Aorta (tissue), 5 donors: ENCODE measurements at regions of chr4 and their contacts with region 1.

Region 1: GRCh38 chr4:113979148-113979904 is at the start of gene ARSJ:
- DNase-seq: peak; percentile 68 to 92
- ATAC-seq: peak; percentile 86
- H3K4me3 ChIP-seq: peak within 1 kb of the TSS; percentile 71 to 93
- H3K27ac ChIP-seq: peak within 1 kb of the TSS; percentile 71 to 87
- H3K4me1 ChIP-seq: peaks cover 0 to 7% of the 10 kb centered on the region in 2 donors
- H3K27me3 ChIP-seq: no peaks in the 10 kb centered on the region
- total RNA-seq, gene ARSJ: 13.5 to 42.4 TPM

Region 2: DNA sequence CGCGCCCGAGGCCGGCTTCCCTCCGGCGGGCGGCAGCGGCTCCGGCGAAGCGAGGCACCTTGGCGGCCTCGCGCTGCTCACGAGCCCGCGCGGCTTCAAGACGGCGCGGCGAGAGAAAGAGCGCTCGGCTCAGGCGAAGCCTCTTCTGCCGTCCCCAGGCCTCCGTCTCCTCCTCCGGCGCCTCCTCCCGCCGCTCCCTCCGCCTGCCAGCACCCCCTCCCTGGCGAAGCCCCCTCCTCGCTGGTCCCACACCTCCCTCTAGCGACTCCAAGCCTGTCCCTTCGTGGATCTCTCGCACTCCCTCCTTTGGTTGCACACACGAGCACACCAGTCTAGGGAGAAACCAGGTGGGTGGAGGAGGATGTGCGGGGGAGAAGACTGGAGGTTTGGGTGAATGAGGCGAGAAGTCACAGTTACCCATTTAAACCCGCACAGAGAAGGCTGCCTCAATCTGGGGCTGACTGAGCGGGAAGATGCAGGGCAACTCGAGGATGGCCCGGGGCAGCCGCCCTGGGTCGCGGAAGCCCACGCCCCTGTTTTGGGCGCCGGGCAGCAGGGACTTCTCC is 217.6 kb before region 1 on chr4 and contains the start of gene CAMK2D:
- intact Hi-C with region 1: loop called in 1 of 2 experiments (anchors 5 kb)
- DNase-seq: peak; percentile 91 to 93
- ATAC-seq: peak; percentile 90
- H3K4me3 ChIP-seq: peak within 1 kb of the TSS; percentile 51 to 77
- H3K27ac ChIP-seq: peak within 1 kb of the TSS; percentile 64 to 90
- H3K4me1 ChIP-seq: no peaks in the 10 kb centered on the region
- H3K27me3 ChIP-seq: no peaks in the 10 kb centered on the region
- total RNA-seq, gene CAMK2D: 52.3 to 71.8 TPM

Region 3: GRCh38 chr4:113790478-113790877 is 188.8 kb before region 1 on chr4:
- intact Hi-C with region 1: no loop called
- DNase-seq: no peak
- ATAC-seq: no peak
- H3K4me3 ChIP-seq: no peak overlapping the region
- H3K27ac ChIP-seq: no peak overlapping the region
- H3K4me1 ChIP-seq: no peaks in the 10 kb centered on the region
- H3K27me3 ChIP-seq: no peaks in the 10 kb centered on the region

Region 4: DNA sequence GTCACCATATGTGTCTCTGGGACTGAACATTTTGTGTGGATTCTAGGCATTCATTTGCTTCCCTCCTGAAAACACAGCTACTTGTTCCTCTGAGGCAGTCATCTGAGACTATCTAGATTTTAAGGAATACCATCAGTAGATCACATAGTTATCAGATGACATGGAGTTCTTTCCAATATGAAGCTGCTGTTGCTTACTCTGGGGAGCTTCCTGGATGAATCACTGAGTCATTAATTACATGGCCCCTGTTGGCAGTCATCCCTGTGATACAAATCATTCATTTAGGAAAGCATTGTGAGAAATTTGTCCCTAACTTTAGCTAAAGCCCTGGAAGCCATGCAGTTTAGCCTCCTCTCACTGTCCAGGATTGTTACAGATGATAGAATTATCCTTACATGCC is 98.3 kb after region 1 on chr4:
- intact Hi-C with region 1: no loop called
- DNase-seq: no peak
- ATAC-seq: no peak
- H3K4me3 ChIP-seq: no peak overlapping the region
- H3K27ac ChIP-seq: no peak overlapping the region
- H3K4me1 ChIP-seq: no peaks in the 10 kb centered on the region
- H3K27me3 ChIP-seq: no peaks in the 10 kb centered on the region

Region 5: GRCh38 chr4:114121221-114121620 is 141.9 kb after region 1 on chr4:
- intact Hi-C with region 1: no loop called
- DNase-seq: no peak
- ATAC-seq: no peak
- H3K4me3 ChIP-seq: no peak overlapping the region
- H3K27ac ChIP-seq: no peak overlapping the region
- H3K4me1 ChIP-seq: no peaks in the 10 kb centered on the region
- H3K27me3 ChIP-seq: peaks cover 0 to 1% of the 10 kb centered on the region in 2 donors

Region 6: DNA sequence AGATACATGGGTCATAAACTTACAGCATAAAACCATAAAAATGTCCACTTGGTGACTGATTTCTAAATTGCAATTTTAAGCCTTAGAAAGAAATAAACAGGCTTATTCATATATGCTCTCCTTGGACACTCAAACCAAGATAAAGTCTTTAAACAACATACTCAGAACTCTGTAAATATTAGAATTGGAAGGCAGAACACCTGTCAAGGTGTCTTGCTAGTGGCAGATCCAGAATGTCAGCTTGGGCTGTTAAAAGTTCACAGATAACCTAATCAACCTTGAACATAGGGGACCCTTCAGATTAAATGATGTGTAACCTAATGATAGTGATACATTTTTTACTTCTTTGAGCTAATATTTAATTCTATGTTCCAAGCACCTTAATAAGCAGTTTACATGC is 208.3 kb after region 1 on chr4:
- intact Hi-C with region 1: no loop called
- DNase-seq: no peak
- ATAC-seq: no peak
- H3K4me3 ChIP-seq: no peak overlapping the region
- H3K27ac ChIP-seq: no peak overlapping the region
- H3K4me1 ChIP-seq: no peaks in the 10 kb centered on the region
- H3K27me3 ChIP-seq: no peaks in the 10 kb centered on the region

Region 7: GRCh38 chr4:114250439-114250891 is 271.1 kb after region 1 on chr4:
- intact Hi-C with region 1: loop called in 1 of 2 experiments (anchors 10 kb)
- DNase-seq: no peak
- ATAC-seq: no peak
- H3K4me3 ChIP-seq: no peak overlapping the region
- H3K27ac ChIP-seq: no peak overlapping the region
- H3K4me1 ChIP-seq: no peaks in the 10 kb centered on the region
- H3K27me3 ChIP-seq: no peaks in the 10 kb centered on the region

Region 8: GRCh38 chr4:114272226-114272625 is 292.9 kb after region 1 on chr4:
- intact Hi-C with region 1: loop called in 1 of 2 experiments (anchors 10 kb)
- DNase-seq: no peak
- ATAC-seq: peak; percentile 65
- H3K4me3 ChIP-seq: no peak overlapping the region
- H3K27ac ChIP-seq: peak overlapping the region in 1 of 2 donors; percentile 28
- H3K4me1 ChIP-seq: peaks cover 2 to 3% of the 10 kb centered on the region in 2 donors
- H3K27me3 ChIP-seq: no peaks in the 10 kb centered on the region